GM18951 (cell line): ENCODE measurements at regions of chr10 and their contacts with region 1.

Region 1: DNA sequence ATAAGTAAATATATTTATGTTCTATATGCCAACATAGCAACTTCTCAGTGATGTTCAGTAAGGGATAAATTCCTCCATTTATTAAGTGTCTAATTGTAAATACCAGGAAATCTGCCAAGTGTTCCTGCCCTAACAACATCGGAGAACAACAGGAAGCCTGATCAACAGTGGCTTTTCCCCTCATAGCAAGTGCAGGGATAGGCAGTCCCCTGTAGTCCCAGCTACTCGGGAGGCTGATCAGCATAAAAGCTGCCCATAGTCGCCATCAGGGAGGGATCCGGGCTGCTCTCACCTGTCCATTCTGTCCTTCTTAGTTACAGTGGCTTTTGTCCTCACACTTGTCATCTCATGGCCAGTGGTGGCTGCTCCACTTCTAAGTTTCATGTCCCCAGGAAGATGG is 141.3 kb downstream of the IDE start:
- POLR2A ChIP-seq: no peak

Region 2: DNA sequence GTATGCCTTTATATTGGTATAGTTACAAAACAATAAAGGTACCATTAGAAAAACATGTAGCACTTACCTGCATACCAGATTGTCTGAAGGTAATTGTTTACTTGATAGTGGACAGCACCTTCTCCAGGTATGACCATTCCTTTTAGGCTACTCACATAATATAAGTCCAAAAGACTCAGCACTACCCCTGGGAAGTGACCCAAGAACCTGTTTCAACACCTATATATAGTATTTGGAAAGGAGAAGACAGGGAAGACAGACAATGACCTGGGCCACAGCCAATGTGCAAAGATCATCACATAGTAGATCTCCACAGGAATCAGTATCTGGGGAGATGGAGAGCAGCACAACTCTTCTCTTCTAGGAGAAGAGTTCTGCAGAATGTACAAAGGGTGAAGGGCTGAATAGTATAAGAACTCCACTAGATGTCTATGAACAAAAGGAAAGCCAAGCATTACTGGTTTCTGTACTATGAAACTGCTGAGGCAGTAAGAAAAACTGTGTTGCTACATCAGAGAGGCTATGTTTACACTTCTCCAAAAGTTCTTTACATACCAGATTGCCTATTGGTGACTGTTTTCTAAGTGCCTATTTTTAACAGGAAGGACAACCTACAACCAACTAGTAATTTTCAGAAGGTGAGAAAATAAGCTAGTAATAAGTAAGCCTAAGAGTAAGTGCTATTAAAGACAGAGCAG is 349.9 kb before region 1 on chr10:
- in situ Hi-C with region 1: loop called (anchors 5 kb)
- POLR2A ChIP-seq: no peak

Region 3: DNA sequence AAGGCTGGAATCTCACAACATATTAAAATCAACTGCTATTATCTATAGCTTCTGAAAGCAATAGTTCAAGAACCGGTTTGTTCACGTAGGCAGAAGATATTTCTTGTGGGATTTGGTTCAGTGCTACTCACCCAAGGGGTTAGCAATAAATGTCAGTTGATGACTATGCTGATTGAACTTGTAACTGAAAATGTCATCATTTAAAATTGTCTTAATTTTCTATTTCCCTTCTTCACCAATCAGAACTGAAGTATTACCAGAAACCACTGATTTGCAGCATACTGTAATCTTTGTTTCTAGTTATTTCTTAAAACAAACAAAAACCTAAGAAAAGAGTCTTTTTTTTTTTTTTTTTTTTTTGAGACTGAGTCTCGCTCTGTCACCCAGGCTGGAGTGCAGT is 187.8 kb before region 1 on chr10:
- in situ Hi-C with region 1: no loop called
- POLR2A ChIP-seq: no peak

Region 4: GRCh38 chr10:92757066-92757710 is 324.6 kb after region 1 on chr10:
- in situ Hi-C with region 1: no loop called
- POLR2A ChIP-seq: no peak